Posterior vena cava (tissue), 2 donors: ENCODE measurements at regions of chr16 and their contacts with region 1.

Region 1: GRCh38 chr16:3761375-3762106 is 44.2 kb upstream of the TRAP1 start:
- DNase-seq: no peak

Region 2: DNA sequence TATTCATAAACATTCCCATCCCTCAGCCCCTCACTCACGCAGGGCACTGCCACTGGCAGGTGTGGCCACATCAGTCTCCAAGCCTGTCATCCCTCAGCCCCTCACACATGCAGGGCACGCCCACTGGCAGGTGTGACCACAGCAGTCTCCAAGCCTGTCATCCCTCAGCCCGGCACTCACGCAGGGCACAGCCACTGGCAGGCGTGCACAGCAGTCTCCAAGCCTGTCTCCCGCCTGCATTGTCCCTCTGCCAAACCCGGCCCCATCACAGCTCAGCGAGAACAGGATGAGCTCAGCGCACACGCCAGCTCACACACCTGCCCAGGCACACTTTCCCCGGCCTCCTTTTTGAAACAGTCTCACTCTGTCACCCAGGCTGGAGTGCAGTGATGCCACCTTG is 808.9 kb before region 1 on chr16:
- intact Hi-C with region 1: loop called in 1 of 2 experiments (anchors 5 kb)
- DNase-seq: no peak

Region 3: GRCh38 chr16:3838600-3839401 is 77.3 kb after region 1 on chr16:
- intact Hi-C with region 1: loop called in 1 of 2 experiments (anchors 10 kb)
- DNase-seq: no peak

Region 4: GRCh38 chr16:3879887-3880564 is 118.5 kb after region 1 on chr16:
- intact Hi-C with region 1: loop called in 1 of 2 experiments (anchors 10 kb)
- DNase-seq: peak; percentile 92